MCF 10A (cell line): ENCODE measurements at regions of chr14 and their contacts with region 1.

Region 1: DNA sequence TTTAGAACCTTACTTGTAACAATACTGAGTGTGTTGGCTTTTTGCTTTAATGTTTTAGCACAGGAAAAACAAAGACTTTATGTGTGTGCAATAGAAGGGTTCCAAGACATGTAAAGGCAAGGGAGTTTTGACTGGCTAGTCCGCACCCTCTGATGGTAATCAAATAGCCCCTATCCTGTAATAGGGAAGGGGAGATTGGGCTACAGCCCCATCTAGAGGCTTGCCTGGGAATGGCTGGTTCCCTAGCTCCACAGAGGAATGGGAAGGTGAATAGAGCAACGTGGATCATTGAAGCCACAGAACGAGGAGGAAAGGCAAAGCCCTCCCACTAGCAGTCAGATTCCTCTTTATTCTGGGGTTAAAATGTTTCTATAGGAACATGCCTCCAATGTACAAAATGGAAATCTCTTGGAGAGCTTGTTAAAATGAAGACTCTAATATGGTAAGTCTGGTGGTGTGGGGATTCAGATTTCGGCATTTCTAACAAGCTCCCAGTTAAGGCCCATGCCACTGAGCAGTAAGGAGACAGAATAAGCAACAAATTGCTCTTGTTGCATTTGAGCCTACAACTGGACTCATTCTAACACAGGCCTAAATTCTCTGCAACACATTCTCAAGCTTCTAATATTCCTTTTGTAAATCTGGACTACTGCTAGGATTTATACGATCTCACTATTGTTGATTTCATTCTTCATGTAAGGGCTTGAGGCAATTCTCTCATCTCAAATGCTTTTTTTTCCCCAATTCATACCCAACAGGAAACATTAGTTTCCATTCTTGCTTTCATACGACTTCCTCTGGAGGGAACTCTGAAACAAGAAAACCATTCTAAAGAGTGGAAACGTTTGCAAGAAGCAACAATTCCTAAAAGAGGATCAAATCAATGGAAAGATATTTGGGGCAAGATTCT is 57.1 kb downstream of the NIN start:
- DNase-seq: peak; percentile 70
- H3K4me3 Mint-ChIP-seq: no peak overlapping the region
- H3K27ac Mint-ChIP-seq: peak overlapping the region; percentile 46
- H3K4me1 Mint-ChIP-seq: peaks cover 40% of the 10 kb centered on the region
- H3K27me3 Mint-ChIP-seq: no peaks in the 10 kb centered on the region
- CTCF ChIP-seq: peak; percentile 82

Region 2: GRCh38 chr14:50542941-50543418 is 230.9 kb before region 1 on chr14:
- CTCF ChIA-PET with region 1: interaction called, 233 read pairs
- POLR2A ChIA-PET with region 1: interaction called, 10 read pairs
- intact Hi-C with region 1: loop called (anchors 1 kb)
- DNase-seq: peak; percentile 64
- H3K4me3 Mint-ChIP-seq: no peak overlapping the region
- H3K27ac Mint-ChIP-seq: no peak overlapping the region
- H3K4me1 Mint-ChIP-seq: peaks cover 19% of the 10 kb centered on the region
- H3K27me3 Mint-ChIP-seq: no peaks in the 10 kb centered on the region
- CTCF ChIP-seq: peak; percentile 61

Region 3: GRCh38 chr14:50599700-50600444 is 174.0 kb before region 1 on chr14:
- CTCF ChIA-PET with region 1: interaction called, 37 read pairs
- POLR2A ChIA-PET with region 1: interaction called, 21 read pairs
- intact Hi-C with region 1: loop called (anchors 1 kb)
- DNase-seq: peak; percentile 72
- H3K4me3 Mint-ChIP-seq: peak overlapping the region; percentile 59
- H3K27ac Mint-ChIP-seq: peak overlapping the region; percentile 98
- H3K4me1 Mint-ChIP-seq: peaks cover 43% of the 10 kb centered on the region
- H3K27me3 Mint-ChIP-seq: no peaks in the 10 kb centered on the region
- CTCF ChIP-seq: peak; percentile 37

Region 4: GRCh38 chr14:50667996-50668825 is 105.7 kb before region 1 on chr14 and contains the start of gene SAV1:
- CTCF ChIA-PET with region 1: interaction called, 3 read pairs
- POLR2A ChIA-PET with region 1: interaction called, 14 read pairs
- intact Hi-C with region 1: loop called (anchors 5 kb)
- DNase-seq: peak; percentile 86
- H3K4me3 Mint-ChIP-seq: no peak within 1 kb of the TSS
- H3K27ac Mint-ChIP-seq: no peak within 1 kb of the TSS
- H3K4me1 Mint-ChIP-seq: peaks cover 13% of the 10 kb centered on the region
- H3K27me3 Mint-ChIP-seq: no peaks in the 10 kb centered on the region
- CTCF ChIP-seq: no peak
- total RNA-seq, gene SAV1: 32.5 and 34.7 TPM in 2 replicates

Region 5: DNA sequence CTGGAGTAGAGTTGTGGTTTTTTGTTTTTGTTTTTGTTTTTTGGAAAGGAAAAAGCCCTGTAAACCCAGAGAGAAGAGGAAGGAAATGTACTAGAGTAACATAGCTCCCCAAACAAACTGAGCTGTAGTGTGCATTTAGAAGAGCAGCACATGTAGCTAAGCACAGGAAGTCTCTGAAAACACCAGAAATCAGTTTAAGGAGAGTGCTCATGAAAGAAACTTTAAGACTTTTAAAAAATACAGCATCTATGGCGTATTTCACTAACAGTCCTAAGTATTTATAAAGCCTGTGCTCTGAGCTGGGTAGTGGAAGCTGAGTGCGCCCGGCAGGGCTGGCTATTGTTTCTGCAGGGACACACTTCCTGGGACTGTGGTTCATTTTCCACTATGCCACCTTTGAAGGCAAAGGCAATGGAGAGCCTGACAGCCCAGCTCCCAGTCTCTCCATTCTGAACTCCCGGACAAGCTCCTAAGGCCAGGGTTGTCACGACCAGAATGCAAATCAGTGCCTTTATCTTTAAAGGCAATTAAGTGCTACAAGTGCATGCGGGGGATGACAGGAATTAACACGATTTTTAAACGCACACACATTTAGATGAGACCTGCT is 11.7 kb after region 1 on chr14:
- CTCF ChIA-PET with region 1: interaction called, 53 read pairs
- POLR2A ChIA-PET with region 1: interaction called, 4 read pairs
- intact Hi-C with region 1: no loop called
- DNase-seq: no peak
- H3K4me3 Mint-ChIP-seq: no peak overlapping the region
- H3K27ac Mint-ChIP-seq: no peak overlapping the region
- H3K4me1 Mint-ChIP-seq: no peaks in the 10 kb centered on the region
- H3K27me3 Mint-ChIP-seq: no peaks in the 10 kb centered on the region
- CTCF ChIP-seq: no peak

Region 6: DNA sequence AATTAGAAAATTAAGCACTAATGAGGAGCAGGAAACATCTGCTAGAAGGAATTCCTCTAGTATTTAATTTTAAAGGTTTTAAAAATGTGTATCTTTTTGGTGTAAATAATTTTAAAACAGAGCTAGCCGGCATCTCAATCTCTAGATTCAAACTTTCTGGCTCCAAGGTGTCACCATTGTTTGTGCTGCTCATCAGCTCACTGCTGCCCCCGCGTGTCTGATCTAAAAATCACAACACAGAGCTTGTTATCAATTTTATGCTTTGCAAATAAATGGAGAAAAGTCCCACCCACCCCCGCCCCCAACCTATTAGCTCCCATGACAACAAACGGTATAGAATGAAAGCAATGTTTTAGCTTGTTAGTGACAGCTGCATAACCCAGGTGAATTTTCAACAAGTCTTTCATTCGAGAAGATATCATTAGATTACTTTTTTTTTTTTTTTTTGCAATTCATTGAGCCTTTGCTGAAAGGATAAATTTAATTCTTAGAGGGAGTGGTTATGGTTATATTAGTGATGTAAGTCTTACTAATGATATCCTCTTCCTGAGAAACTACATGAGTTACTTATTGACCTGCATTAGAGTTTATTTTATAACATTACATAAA is 86.7 kb after region 1 on chr14:
- CTCF ChIA-PET with region 1: interaction called, 101 read pairs
- POLR2A ChIA-PET with region 1: interaction called, 9 read pairs
- intact Hi-C with region 1: loop called (anchors 1 kb)
- DNase-seq: peak; percentile 79
- H3K4me3 Mint-ChIP-seq: peak overlapping the region; percentile 82
- H3K27ac Mint-ChIP-seq: peak overlapping the region; percentile 49
- H3K4me1 Mint-ChIP-seq: no peaks in the 10 kb centered on the region
- H3K27me3 Mint-ChIP-seq: no peaks in the 10 kb centered on the region
- CTCF ChIP-seq: peak; percentile 68